B cell (primary cell): ENCODE measurements at regions of chr22 and their contacts with region 1.

Region 1: GRCh38 chr22:37849089-37849751 is at the start of gene EIF3L:
- DNase-seq: peak; percentile 92
- ATAC-seq: peak; percentile 68
- H3K4me3 ChIP-seq: peak within 1 kb of the TSS; percentile 62 to 98 (median 90)
- H3K4me3 Mint-ChIP-seq: peak within 1 kb of the TSS; percentile 91
- H3K27ac ChIP-seq: peak within 1 kb of the TSS; percentile 81 to 90
- H3K27ac Mint-ChIP-seq: peak within 1 kb of the TSS; percentile 99
- H3K4me1 ChIP-seq: peaks cover 22 to 30% of the 10 kb centered on the region in 2 donors
- H3K4me1 Mint-ChIP-seq: peaks cover 43% of the 10 kb centered on the region
- H3K27me3 ChIP-seq: no peaks in the 10 kb centered on the region
- H3K27me3 Mint-ChIP-seq: no peaks in the 10 kb centered on the region
- CTCF ChIP-seq: no peak
- total RNA-seq, gene EIF3L: 526 and 560 TPM in 2 replicates

Region 2: DNA sequence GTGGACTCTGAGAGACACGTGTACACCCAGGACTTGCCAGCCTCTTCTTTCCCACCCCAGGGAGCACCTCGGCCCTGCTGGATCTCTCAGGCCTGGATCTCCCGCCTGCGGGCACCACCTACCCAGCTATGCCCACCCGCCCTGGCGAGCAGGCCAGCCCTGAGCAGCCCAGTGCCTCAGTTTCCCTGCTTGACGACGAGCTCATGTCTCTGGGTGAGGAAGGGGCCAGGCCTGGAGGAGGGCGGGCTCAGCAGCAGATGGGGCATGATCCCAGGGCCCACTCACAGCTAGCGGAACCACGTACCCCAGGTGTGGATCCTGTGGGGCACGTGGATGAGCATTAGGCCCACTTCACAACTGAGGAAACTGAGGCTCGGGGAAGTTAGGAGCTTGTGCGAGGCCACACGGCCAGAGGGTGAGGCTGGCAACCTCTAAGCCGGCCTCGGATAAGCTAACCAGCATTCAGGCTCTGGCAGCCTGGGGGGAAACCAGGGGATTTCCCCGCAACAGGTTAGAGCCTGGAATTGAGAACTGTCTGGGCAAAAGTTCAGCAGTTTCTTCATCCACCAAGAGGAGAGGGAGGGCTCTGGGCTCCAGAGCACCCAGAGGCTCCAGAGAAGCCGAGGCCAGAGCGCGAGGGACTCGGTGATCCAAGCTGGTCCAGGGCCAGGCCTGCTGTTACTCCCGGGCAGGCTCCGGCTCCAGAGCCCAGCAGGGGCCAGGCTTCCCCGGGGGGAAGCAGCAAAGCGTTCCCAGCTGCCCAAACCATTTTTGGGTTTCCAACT is 223.3 kb before region 1 on chr22:
- CTCF ChIA-PET with region 1: no interaction called
- POLR2A ChIA-PET with region 1: no interaction called
- intact Hi-C with region 1: no loop called
- DNase-seq: no peak
- ATAC-seq: no peak
- H3K4me3 ChIP-seq: no peak overlapping the region
- H3K4me3 Mint-ChIP-seq: no peak overlapping the region
- H3K27ac ChIP-seq: peak overlapping the region; percentile 79 to 80
- H3K27ac Mint-ChIP-seq: peak overlapping the region; percentile 90
- H3K4me1 ChIP-seq: peaks cover 38 to 58% of the 10 kb centered on the region in 2 donors
- H3K4me1 Mint-ChIP-seq: peaks cover 60% of the 10 kb centered on the region
- H3K27me3 ChIP-seq: no peaks in the 10 kb centered on the region
- H3K27me3 Mint-ChIP-seq: no peaks in the 10 kb centered on the region
- CTCF ChIP-seq: no peak

Region 3: GRCh38 chr22:37658133-37659065 is 190.8 kb before region 1 on chr22 and contains the start of gene PDXP:
- CTCF ChIA-PET with region 1: no interaction called
- POLR2A ChIA-PET with region 1: no interaction called
- intact Hi-C with region 1: no loop called
- DNase-seq: peak; percentile 99
- ATAC-seq: peak; percentile 88
- H3K4me3 ChIP-seq: peak within 1 kb of the TSS; percentile 49 to 74 (median 64)
- H3K4me3 Mint-ChIP-seq: peak within 1 kb of the TSS; percentile 98
- H3K27ac ChIP-seq: peak within 1 kb of the TSS; percentile 72 to 84
- H3K27ac Mint-ChIP-seq: peak within 1 kb of the TSS; percentile 99
- H3K4me1 ChIP-seq: peaks cover 38 to 46% of the 10 kb centered on the region in 2 donors
- H3K4me1 Mint-ChIP-seq: peaks cover 47% of the 10 kb centered on the region
- H3K27me3 ChIP-seq: no peaks in the 10 kb centered on the region
- H3K27me3 Mint-ChIP-seq: no peaks in the 10 kb centered on the region
- CTCF ChIP-seq: no peak
- total RNA-seq, gene PDXP: 16.6 and 16.9 TPM in 2 replicates

Region 4: DNA sequence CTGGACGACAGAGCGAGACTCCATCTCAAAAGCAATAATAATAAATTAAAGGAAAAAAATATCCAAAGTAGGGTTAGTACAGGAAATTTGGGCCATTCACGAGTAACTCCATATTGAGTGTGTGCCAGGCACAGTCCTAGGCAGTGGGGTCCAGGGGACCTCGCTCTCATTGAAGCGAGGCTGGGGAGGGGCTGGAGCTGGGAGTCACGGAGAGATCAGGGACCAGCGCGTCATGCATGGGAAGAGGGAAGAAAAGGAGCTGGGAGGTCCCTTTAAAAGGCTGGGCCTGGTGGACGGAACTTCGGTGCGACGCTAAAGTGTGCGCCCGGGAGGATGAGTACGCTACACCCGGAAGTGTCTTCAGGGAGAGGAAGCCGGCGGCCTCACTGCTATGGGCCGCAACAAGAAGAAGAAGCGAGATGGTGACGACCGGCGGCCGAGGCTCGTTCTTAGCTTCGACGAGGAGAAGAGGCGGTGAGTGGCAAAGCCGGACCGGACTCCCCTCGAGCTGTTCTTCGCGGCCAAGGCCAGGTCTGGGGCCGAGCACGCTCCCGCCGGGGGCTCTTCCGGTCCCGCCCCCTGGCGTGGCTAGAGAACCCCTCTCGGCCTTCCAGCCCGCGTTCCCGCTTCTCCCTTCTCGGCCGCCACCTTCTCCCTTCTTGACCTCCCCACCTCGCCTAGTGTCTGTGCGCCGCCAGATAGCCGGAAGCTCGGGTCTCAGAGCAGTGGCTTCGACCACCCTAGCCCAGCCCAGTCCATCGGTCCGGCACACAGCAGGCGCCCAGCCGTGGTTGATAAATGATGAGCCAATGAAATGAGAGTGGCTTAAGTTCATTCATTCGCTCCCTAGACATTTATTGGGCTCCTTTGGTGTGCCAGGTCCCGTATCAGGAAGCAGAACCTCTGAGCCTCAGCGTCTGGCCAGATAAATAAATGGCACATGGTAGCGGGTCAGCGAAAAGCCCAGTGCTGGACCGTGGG is 162.9 kb before region 1 on chr22 and contains the start of gene NOL12:
- CTCF ChIA-PET with region 1: interaction called, 3 read pairs
- POLR2A ChIA-PET with region 1: no interaction called
- intact Hi-C with region 1: loop called (anchors 1 kb)
- DNase-seq: peak; percentile 93
- ATAC-seq: peak; percentile 86
- H3K4me3 ChIP-seq: peak within 1 kb of the TSS; percentile 79 to 98 (median 88)
- H3K4me3 Mint-ChIP-seq: peak within 1 kb of the TSS; percentile 99
- H3K27ac ChIP-seq: peak within 1 kb of the TSS; percentile 70 to 81
- H3K27ac Mint-ChIP-seq: peak within 1 kb of the TSS; percentile 95
- H3K4me1 ChIP-seq: peaks cover 10 to 30% of the 10 kb centered on the region in 2 donors
- H3K4me1 Mint-ChIP-seq: peaks cover 28% of the 10 kb centered on the region
- H3K27me3 ChIP-seq: no peaks in the 10 kb centered on the region
- H3K27me3 Mint-ChIP-seq: no peaks in the 10 kb centered on the region
- CTCF ChIP-seq: no peak
- total RNA-seq, gene NOL12: 34.7 and 38.5 TPM in 2 replicates

Region 5: DNA sequence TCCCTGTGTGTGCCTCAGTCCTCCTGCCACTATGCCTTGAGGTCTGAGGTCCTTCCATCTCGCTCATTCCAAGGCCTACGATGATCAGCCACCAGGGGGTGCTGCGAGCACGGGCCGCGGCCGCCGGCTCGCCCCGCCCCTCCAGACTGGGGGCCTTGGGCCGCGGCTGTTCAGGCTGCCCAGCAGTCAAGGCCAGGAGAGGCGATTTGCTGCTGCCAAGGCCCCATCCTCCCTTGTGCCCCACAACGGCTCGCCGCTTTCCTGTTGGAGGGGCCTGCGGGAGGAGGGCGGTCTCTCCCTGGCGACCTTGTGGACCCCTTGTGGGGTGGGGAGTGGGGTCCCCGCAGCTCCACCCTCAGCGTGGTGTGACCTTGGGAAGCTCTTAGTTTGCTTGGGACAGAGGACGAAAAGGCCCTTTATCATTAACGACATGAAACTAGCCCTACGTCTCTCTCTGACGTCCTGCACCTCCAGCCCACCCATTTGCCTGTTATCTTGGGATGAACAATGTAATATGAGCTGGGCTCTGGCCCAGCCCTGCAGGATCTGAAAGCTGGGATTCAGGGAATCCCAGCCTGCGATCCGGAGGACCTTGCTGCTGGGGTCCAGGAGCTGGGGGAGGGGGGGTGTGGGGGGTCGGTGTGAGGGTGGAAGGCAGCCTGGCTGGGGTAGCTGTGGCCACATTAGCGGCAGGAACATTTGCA is 31.4 kb before region 1 on chr22:
- CTCF ChIA-PET with region 1: interaction called, 20 read pairs
- POLR2A ChIA-PET with region 1: interaction called, 5 read pairs
- intact Hi-C with region 1: no loop called
- DNase-seq: peak; percentile 86
- ATAC-seq: peak; percentile 90
- H3K4me3 ChIP-seq: peak overlapping the region in 4 of 5 experiments; percentile 29 to 51 (median 40)
- H3K4me3 Mint-ChIP-seq: peak overlapping the region; percentile 82
- H3K27ac ChIP-seq: no peak overlapping the region
- H3K27ac Mint-ChIP-seq: no peak overlapping the region
- H3K4me1 ChIP-seq: peaks cover 19 to 20% of the 10 kb centered on the region in 2 donors
- H3K4me1 Mint-ChIP-seq: peaks cover 10% of the 10 kb centered on the region
- H3K27me3 ChIP-seq: peaks cover 0 to 44% (median 9%) of the 10 kb centered on the region in 4 experiments
- H3K27me3 Mint-ChIP-seq: peaks cover 19% of the 10 kb centered on the region
- CTCF ChIP-seq: peak; percentile 90

Region 6: GRCh38 chr22:37953437-37954179 is 104.4 kb after region 1 on chr22 and contains the starts of genes C22orf23 and POLR2F:
- CTCF ChIA-PET with region 1: no interaction called
- POLR2A ChIA-PET with region 1: interaction called, 3 read pairs
- intact Hi-C with region 1: loop called (anchors 1 kb)
- DNase-seq: peak; percentile 97
- ATAC-seq: peak; percentile 94
- H3K4me3 ChIP-seq: peak within 1 kb of the TSS; percentile 64 to 99 (median 88)
- H3K4me3 Mint-ChIP-seq: peak within 1 kb of the TSS; percentile 99
- H3K27ac ChIP-seq: peak within 1 kb of the TSS; percentile 24 to 76
- H3K27ac Mint-ChIP-seq: peak within 1 kb of the TSS; percentile 97
- H3K4me1 ChIP-seq: peaks cover 17 to 20% of the 10 kb centered on the region in 2 donors
- H3K4me1 Mint-ChIP-seq: peaks cover 26% of the 10 kb centered on the region
- H3K27me3 ChIP-seq: peaks cover 2 to 14% (median 8%) of the 10 kb centered on the region in 4 experiments
- H3K27me3 Mint-ChIP-seq: peaks cover 14% of the 10 kb centered on the region
- CTCF ChIP-seq: no peak
- total RNA-seq, gene C22orf23: not detected in 2 replicates
- total RNA-seq, gene POLR2F: 39.3 and 41.8 TPM in 2 replicates

Region 7: GRCh38 chr22:38030311-38031133 is 181.3 kb after region 1 on chr22:
- CTCF ChIA-PET with region 1: no interaction called
- POLR2A ChIA-PET with region 1: no interaction called
- intact Hi-C with region 1: no loop called
- DNase-seq: no peak
- ATAC-seq: no peak
- H3K4me3 ChIP-seq: no peak overlapping the region
- H3K4me3 Mint-ChIP-seq: no peak overlapping the region
- H3K27ac ChIP-seq: no peak overlapping the region
- H3K27ac Mint-ChIP-seq: no peak overlapping the region
- H3K4me1 ChIP-seq: no peaks in the 10 kb centered on the region
- H3K4me1 Mint-ChIP-seq: no peaks in the 10 kb centered on the region
- H3K27me3 ChIP-seq: no peaks in the 10 kb centered on the region
- H3K27me3 Mint-ChIP-seq: no peaks in the 10 kb centered on the region
- CTCF ChIP-seq: no peak